HCT116 (cell line): ENCODE measurements at regions of chr3 and their contacts with region 1.

Region 1: GRCh38 chr3:152026033-152026556 is 152.7 kb downstream of the SUCNR1 start:
- DNase-seq: peak; percentile 62
- ATAC-seq: peak; percentile 2; the same call in 1 of the 2 replicates
- H3K4me3 ChIP-seq: peak overlapping the region in 1 of 2 experiments; percentile 16; a peak in 2 of 4 replicates
- H3K27ac ChIP-seq: peak overlapping the region; percentile 97; the same call in 1 of the 2 replicates
- H3K4me1 ChIP-seq: peaks cover 44 to 65% of the 10 kb centered on the region in 2 experiments
- H3K27me3 ChIP-seq: no peaks in the 10 kb centered on the region
- CTCF ChIP-seq: peak in 2 of 3 experiments; percentile 39 to 45; a peak in 3 of 6 replicates
- POLR2A ChIP-seq: no peak
- RAD21 ChIP-seq: peak; percentile 59

Region 2: DNA sequence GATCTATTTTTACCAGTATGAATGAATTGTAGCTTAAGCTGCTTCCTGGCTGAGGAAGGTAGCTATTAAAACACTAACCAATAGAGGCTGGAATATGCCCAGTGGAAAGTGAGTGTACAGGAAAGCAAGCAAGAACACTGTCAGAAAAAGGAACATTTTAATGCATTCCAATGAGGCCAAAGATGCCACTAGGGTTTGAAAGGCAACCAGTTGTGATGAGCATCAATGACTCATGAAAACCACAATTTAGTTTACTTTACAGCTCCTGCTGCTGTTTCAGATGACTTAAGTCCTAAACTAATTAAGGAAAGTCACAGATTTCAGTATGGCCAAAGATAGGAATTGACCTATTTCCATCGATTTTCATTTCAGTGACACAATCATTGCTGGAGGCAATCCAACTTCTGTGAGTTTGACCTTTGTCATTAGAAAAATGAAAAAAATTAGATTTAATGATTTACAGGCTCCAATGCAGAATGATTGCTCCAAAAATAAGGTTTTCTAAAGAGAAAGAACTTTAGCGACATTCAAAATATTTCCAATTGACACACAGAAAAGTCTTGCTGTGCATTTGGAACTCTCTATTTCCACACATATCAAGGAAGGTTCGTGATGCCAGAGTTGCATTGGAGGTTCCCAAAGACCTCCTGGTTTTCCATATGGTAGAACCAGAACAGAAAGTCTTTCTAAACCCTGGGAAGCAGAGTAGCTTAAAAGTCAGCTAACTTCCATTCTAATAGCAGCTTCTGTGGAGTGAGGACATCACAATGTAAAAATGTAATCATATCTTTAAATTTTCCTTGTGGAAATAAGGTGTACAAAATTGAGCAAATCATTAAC is 49.7 kb before region 1 on chr3:
- CTCF ChIA-PET with region 1: no interaction called
- POLR2A ChIA-PET with region 1: interaction called, 7 read pairs
- RAD21 ChIA-PET with region 1: interaction called in 1 of 2 experiments, 3 read pairs
- intact Hi-C with region 1: loop called (anchors 5 kb)
- DNase-seq: peak; percentile 94
- ATAC-seq: peak; percentile 81
- H3K4me3 ChIP-seq: peak overlapping the region in 1 of 2 experiments; percentile 12; a peak in 1 of 4 replicates
- H3K27ac ChIP-seq: peak overlapping the region; percentile 92
- H3K4me1 ChIP-seq: peaks cover 53 to 64% of the 10 kb centered on the region in 2 experiments
- H3K27me3 ChIP-seq: no peaks in the 10 kb centered on the region
- CTCF ChIP-seq: no peak
- POLR2A ChIP-seq: no peak
- RAD21 ChIP-seq: peak; percentile 34